Naive thymus-derived CD4-positive, alpha-beta T cell (primary cell): ENCODE measurements at regions of chr11 and their contacts with region 1.

Region 1: GRCh38 chr11:105081412-105082087 is 36.4 kb upstream of the CARD16 start:
- DNase-seq: no peak
- ATAC-seq: no peak
- H3K4me3 ChIP-seq: no peak overlapping the region
- H3K4me3 Mint-ChIP-seq: no peak overlapping the region
- H3K27ac ChIP-seq: no peak overlapping the region
- H3K27ac Mint-ChIP-seq: no peak overlapping the region
- H3K4me1 ChIP-seq: no peaks in the 10 kb centered on the region
- H3K4me1 Mint-ChIP-seq: peaks cover 5 to 24% (median 12%) of the 10 kb centered on the region in 7 donors
- H3K27me3 ChIP-seq: no peaks in the 10 kb centered on the region
- H3K27me3 Mint-ChIP-seq: peaks cover 10 to 31% (median 23%) of the 10 kb centered on the region in 5 donors

Region 2: DNA sequence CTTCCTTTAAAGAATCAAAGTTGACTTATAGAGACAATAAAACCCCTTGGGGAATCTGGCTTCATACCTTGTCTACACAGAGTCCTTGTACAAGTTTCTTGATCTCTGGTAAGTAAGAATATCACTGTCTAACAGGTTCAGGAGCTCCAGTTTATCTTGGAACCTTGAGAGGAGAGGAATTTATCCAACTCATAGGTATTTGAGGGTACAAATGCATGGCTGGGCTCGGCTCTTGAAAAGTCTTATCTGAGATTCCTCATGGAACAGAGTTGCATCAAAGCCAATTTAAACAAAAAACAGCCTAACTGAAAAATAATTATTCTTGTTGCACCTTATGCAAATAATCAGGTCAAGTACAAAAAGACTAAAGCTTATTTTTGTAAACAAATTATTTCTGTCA is 24.6 kb after region 1 on chr11:
- CTCF ChIA-PET with region 1: no interaction called
- POLR2A ChIA-PET with region 1: no interaction called
- intact Hi-C with region 1: loop called in 1 of 2 experiments (anchors 1 kb)
- DNase-seq: no peak
- ATAC-seq: no peak
- H3K4me3 ChIP-seq: no peak overlapping the region
- H3K4me3 Mint-ChIP-seq: no peak overlapping the region
- H3K27ac ChIP-seq: no peak overlapping the region
- H3K27ac Mint-ChIP-seq: no peak overlapping the region
- H3K4me1 ChIP-seq: peaks cover 0 to under 1% of the 10 kb centered on the region in 2 donors
- H3K4me1 Mint-ChIP-seq: peaks cover 16 to 32% (median 21%) of the 10 kb centered on the region in 7 donors
- H3K27me3 ChIP-seq: no peaks in the 10 kb centered on the region
- H3K27me3 Mint-ChIP-seq: peaks cover 3 to 18% (median 11%) of the 10 kb centered on the region in 5 donors